ENCODE measurements at regions of chr11 and their contacts with region 1.

Region 1: GRCh38 chr11:35822815-35823495 is 120.9 kb upstream of the LDLRAD3 start:
- H3K4me3 ChIP-seq: no peak overlapping the region
- H3K27ac ChIP-seq: no peak overlapping the region
- H3K4me1 ChIP-seq: no peaks in the 10 kb centered on the region
- CTCF ChIP-seq: no peak

Region 2: GRCh38 chr11:35617687-35618496 is 205.1 kb before region 1 on chr11 and contains the start of gene FJX1:
- CTCF ChIA-PET with region 1: interaction called, 24 read pairs
- POLR2A ChIA-PET with region 1: interaction called, 5 read pairs
- H3K4me3 ChIP-seq: peak within 1 kb of the TSS; percentile 63
- H3K27ac ChIP-seq: peak within 1 kb of the TSS; percentile 88; the same call in 1 of the 2 replicates
- H3K4me1 ChIP-seq: peaks cover 3% of the 10 kb centered on the region
- CTCF ChIP-seq: no peak

Region 3: DNA sequence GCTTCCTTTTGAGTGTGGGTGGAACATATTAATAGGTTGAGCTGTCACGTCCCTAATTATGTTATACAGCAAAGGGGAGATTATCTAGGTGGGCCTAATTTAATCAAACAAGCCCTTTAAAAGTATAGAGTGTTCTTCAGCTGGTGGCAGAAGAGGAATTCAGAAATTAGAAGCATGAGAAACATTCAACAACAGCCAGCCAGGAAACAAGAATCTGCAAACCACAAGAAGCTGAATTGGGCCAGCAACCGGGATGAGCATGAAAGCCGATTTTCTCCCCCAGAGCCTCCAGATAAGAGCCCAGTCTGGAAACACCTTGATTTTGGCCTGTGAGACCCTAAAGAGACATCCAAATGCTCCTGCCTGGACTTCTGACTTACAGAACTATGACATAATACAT is 15.1 kb after region 1 on chr11:
- CTCF ChIA-PET with region 1: interaction called, 37 read pairs
- POLR2A ChIA-PET with region 1: no interaction called
- H3K4me3 ChIP-seq: no peak overlapping the region
- H3K27ac ChIP-seq: no peak overlapping the region
- H3K4me1 ChIP-seq: no peaks in the 10 kb centered on the region
- CTCF ChIP-seq: no peak

Region 4: GRCh38 chr11:36023922-36024321 is 201.0 kb after region 1 on chr11:
- CTCF ChIA-PET with region 1: interaction called, 11 read pairs
- POLR2A ChIA-PET with region 1: no interaction called
- H3K4me3 ChIP-seq: no peak overlapping the region
- H3K27ac ChIP-seq: no peak overlapping the region
- H3K4me1 ChIP-seq: no peaks in the 10 kb centered on the region
- CTCF ChIP-seq: no peak

Region 5: GRCh38 chr11:36073411-36074203 is 250.7 kb after region 1 on chr11:
- CTCF ChIA-PET with region 1: interaction called, 16 read pairs
- POLR2A ChIA-PET with region 1: no interaction called
- H3K4me3 ChIP-seq: no peak overlapping the region
- H3K27ac ChIP-seq: no peak overlapping the region
- H3K4me1 ChIP-seq: 0 out of 2 replicates have a peak, but pooled peaks cover 2% of the 10 kb centered on the region
- CTCF ChIP-seq: no peak

Region 6: DNA sequence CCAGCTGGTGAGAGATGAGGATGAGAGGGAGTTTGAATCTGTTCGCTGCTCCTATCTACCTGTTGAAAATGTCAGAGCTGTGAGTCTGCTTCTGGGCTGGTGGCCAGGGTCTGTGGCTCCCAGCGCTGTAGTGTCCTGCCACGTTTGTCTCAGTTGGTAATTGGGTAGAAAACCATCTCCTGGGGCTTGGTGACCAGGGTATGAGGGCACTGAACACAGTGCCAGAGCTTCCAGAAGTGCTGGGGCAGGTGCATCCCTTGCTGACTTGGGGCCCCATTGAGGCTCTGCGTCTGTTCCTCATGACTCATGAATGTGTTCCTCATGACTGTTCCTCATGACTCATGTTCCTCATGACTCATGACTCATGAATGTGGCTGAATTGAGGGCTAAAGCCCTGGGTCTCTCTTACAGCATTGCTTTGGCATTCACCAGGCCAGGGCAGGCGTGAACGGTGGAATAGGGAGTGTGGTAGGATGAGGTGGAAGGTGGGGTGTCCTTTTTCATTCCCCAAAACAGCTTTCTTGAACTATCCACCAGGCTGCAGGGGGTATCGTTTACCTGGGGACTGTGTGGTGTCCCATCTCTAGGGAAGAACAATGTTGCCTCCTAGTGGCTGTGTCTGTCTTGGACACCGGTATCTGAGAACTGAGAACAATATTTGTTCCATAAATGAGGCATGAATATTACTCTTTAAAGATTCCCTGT is 326.7 kb after region 1 on chr11:
- CTCF ChIA-PET with region 1: interaction called, 25 read pairs
- POLR2A ChIA-PET with region 1: no interaction called
- H3K4me3 ChIP-seq: no peak overlapping the region
- H3K27ac ChIP-seq: no peak overlapping the region
- H3K4me1 ChIP-seq: no peaks in the 10 kb centered on the region; the same call in 1 of the 2 replicates
- CTCF ChIP-seq: no peak

Region 7: DNA sequence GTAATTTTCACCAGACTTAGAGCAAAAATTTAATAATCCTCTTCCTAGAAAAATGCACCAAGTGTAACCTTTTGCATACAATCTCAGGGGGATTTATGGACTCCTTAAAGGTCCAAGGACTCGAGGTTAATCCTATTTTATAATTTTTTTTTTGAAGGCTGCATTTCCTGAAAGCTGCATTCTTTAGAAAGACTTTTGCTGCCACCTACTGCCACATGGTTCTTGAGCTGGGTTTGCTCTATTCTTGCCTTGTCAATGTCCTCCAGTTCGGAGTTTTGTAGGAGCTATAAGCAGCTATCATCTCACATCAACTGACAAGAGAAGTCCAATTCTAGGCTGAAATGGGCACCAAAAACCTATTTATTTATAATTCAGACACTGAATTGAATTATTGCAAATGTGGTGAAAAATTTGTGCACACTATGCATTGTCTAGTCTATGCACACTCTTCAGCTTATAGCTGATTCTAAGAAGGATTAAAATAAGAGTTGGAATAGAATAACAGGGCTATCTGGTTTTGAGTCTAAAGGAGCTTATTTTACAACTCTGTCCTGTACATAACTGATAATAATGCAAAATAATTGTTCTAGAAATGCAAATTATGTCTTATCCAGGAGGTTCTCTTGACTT is 655.9 kb after region 1 on chr11:
- CTCF ChIA-PET with region 1: interaction called, 24 read pairs
- POLR2A ChIA-PET with region 1: no interaction called
- H3K4me3 ChIP-seq: no peak overlapping the region
- H3K27ac ChIP-seq: no peak overlapping the region
- H3K4me1 ChIP-seq: no peaks in the 10 kb centered on the region
- CTCF ChIP-seq: peak; percentile 42; the same call in 1 of the 2 replicates